ENCODE measurements at regions of chr17 and their contacts with region 1.

Region 1: DNA sequence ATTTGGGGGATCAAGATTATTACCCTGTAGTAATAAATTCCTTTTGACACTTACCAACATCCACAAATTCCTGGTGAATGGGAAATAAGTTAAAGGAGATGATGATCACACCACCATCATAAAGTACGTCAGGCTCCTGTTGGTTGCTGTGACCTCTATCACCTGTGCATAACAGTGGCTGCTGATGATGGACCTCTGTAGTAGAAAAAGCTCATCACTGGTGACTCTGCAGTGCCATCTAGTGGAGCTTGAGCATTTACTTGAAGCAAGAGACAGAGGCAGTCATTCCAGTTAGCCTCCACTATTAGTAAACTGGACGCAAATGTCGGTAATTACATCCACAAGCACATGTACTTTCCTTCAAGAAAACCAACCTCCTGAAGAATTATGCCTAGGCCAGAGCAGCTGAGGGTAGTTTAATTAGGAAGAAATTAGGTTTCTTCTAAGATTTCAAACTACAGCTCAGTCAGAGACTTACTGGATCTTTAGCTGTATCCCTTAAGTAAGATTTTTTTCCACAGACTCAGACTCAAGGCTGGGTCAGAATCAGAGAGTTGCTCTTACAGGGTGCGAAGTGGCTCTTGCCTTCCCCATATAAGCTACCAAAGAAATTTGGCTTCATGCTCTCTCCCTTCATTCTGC is 39.3 kb downstream of the CYB561 start:
- DNase-seq: peak; percentile 42
- H3K4me3 Mint-ChIP-seq: no peak overlapping the region
- H3K27ac Mint-ChIP-seq: no peak overlapping the region
- H3K4me1 Mint-ChIP-seq: peaks cover 5% of the 10 kb centered on the region
- H3K27me3 Mint-ChIP-seq: no peaks in the 10 kb centered on the region

Region 2: DNA sequence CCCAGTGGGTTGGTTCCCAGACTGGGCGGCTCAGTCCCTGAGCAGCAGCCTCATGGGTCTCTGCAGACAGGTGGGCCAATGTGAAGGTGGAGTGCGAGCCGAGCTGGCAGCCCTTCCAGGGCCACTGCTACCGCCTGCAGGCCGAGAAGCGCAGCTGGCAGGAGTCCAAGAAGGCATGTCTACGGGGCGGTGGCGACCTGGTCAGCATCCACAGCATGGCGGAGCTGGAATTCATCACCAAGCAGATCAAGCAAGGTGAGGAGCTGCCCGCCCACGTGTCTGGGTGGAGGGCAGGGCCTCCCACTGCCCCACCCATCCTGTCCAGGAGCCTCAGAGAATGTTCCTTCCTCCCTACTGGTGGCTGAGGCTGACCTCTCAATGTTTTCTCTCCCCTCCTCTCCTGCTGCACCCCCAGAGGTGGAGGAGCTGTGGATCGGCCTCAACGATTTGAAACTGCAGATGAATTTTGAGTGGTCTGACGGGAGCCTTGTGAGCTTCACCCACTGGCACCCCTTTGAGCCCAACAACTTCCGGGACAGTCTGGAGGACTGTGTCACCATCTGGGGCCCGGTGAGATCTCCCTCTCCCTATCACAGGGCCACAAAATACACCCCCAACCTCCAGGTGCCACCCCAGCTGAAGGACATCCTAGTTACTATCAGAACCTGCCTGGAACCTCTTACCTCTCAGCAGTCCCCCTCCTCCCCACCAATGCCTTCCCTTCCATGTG is 735.1 kb before region 1 on chr17:
- intact Hi-C with region 1: loop called (anchors 1 kb)
- DNase-seq: no peak
- H3K4me3 Mint-ChIP-seq: no peak overlapping the region
- H3K27ac Mint-ChIP-seq: no peak overlapping the region
- H3K4me1 Mint-ChIP-seq: no peaks in the 10 kb centered on the region
- H3K27me3 Mint-ChIP-seq: peaks cover 11% of the 10 kb centered on the region

Region 3: GRCh38 chr17:62703775-62704378 is 702.9 kb before region 1 on chr17:
- intact Hi-C with region 1: loop called (anchors 1 kb)
- DNase-seq: peak; percentile 55
- H3K4me3 Mint-ChIP-seq: no peak overlapping the region
- H3K27ac Mint-ChIP-seq: no peak overlapping the region
- H3K4me1 Mint-ChIP-seq: no peaks in the 10 kb centered on the region
- H3K27me3 Mint-ChIP-seq: peaks cover 44% of the 10 kb centered on the region

Region 4: GRCh38 chr17:63082273-63082993 is 324.4 kb before region 1 on chr17:
- intact Hi-C with region 1: loop called (anchors 1 kb)
- DNase-seq: no peak
- H3K4me3 Mint-ChIP-seq: no peak overlapping the region
- H3K27ac Mint-ChIP-seq: no peak overlapping the region
- H3K4me1 Mint-ChIP-seq: no peaks in the 10 kb centered on the region
- H3K27me3 Mint-ChIP-seq: peaks cover 3% of the 10 kb centered on the region

Region 5: GRCh38 chr17:63611354-63611753 is 204.5 kb after region 1 on chr17:
- intact Hi-C with region 1: loop called (anchors 1 kb)
- DNase-seq: peak; percentile 11
- H3K4me3 Mint-ChIP-seq: peak overlapping the region; percentile 77
- H3K27ac Mint-ChIP-seq: peak overlapping the region; percentile 98
- H3K4me1 Mint-ChIP-seq: peaks cover 30% of the 10 kb centered on the region
- H3K27me3 Mint-ChIP-seq: no peaks in the 10 kb centered on the region

Measured in activated T-helper 1 cell treated with anti-CD3 and anti-CD28 coated beads, Interleukin-12 subunit alpha, Interleukin-12 subunit beta, Interleukin-2, Interleukin-4 antibody, amounts not matched to agents 30 ng/mL and 10 ng/mL and 1 ng/mL, durations not matched to agents 14 hours and 24 hours and 36 hours (primary cell).